Activated CD4-positive, alpha-beta T cell treated with anti-CD3 and anti-CD28 coated beads, Interleukin-2, amount 10 ng/mL, durations not matched to agents 24 days and 14 days (primary cell): ENCODE measurements at regions of chr13 and their contacts with region 1.

Region 1: GRCh38 chr13:33542283-33543088 is 256.9 kb upstream of the STARD13 start:
- DNase-seq: peak; percentile 100
- H3K4me3 Mint-ChIP-seq: peak overlapping the region; percentile 90
- H3K27ac Mint-ChIP-seq: peak overlapping the region; percentile 99
- H3K4me1 Mint-ChIP-seq: peaks cover 37% of the 10 kb centered on the region
- H3K27me3 Mint-ChIP-seq: peaks cover 2% of the 10 kb centered on the region

Region 2: DNA sequence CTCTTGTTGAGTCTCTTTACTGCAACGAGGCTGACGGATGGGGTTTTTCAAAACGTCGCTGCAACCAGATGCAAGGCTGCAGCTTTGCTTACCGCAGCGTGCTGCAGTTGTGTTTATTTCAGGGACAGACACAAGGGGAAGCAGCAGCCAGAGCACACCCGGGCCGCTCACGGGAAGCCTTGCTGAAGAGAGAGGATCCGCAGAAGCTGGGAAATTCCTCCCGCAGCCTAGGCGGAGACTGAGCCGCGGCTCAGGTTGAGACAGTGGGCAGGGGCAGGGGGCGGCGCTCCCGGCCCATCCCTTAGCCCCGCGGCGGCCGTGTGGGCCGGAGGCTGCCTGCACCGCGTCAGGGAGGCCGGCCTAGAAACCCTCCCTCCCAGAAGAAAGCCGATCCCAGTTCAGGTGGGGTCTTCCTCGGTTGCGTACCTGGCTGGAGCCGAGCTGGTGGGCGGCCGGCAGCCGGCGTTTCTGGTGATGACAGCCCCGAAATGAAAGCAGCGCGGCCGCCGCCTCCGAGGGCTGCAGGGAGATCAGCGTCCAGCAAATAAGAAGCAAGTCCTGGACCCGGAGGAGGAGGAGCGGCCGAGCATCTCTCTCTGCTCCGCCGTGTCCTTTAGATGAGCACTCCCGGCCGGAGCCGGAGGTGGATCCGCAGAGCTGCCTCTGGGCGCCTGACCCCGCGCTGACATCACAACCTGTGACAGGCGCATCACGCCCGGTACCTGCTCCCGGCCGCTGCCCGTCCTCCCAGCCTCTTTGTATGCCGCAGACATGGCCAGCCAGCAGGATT is 1511.3 kb before region 1 on chr13 and contains the start of gene FRY:
- intact Hi-C with region 1: loop called (anchors 10 kb)
- DNase-seq: peak; percentile 87
- H3K4me3 Mint-ChIP-seq: peak within 1 kb of the TSS; percentile 83
- H3K27ac Mint-ChIP-seq: peak within 1 kb of the TSS; percentile 61
- H3K4me1 Mint-ChIP-seq: peaks cover 37% of the 10 kb centered on the region
- H3K27me3 Mint-ChIP-seq: peaks cover 7% of the 10 kb centered on the region
- total RNA-seq, gene FRY: 1.8 and 2.8 TPM in 2 replicates

Region 3: DNA sequence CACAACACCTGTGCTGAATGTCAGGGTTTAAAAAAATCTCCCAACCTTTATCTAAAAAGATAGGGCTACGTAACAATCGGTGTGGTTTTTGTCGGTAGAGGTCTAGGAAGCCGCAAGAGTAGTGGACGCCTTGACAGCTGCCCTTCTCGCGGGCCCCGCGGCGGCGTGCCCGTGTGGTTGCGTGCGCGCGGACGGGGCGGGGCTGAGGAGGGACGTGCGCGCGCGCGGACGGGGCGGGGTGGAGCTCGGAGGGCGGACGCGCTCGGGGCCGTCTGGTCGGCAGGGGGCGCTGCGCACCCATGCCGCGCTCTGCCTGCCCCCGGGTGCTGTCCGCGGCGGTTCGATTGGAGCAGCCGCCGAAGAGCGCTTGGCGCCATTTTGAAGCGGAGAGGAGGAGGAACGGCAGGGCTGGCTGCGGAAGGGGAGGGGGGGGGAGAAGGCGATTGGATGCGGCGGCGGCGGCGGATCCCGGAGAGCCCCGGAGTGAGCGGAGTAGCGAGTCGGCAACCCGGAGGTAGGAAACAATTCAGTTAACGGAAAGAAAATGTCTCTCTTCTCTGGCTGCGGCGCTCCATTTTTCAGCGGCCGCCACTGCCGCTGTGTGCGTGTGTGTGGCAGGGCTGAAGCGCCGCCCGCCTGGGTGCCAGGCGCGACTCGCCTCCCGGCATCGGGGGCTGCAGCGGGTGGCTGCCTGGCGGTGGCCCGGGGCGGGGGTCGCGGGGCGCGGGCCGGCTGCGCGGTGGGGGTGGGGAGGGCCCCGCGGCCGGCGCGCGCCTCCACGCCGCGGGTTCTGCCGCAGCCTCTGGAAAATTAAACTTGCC is 956.2 kb before region 1 on chr13 and contains the start of gene PDS5B:
- intact Hi-C with region 1: loop called (anchors 1 kb)
- DNase-seq: peak; percentile 98
- H3K4me3 Mint-ChIP-seq: peak within 1 kb of the TSS; percentile 86
- H3K27ac Mint-ChIP-seq: peak within 1 kb of the TSS; percentile 95
- H3K4me1 Mint-ChIP-seq: peaks cover 36% of the 10 kb centered on the region
- H3K27me3 Mint-ChIP-seq: peaks cover 9% of the 10 kb centered on the region
- total RNA-seq, gene PDS5B: 60.3 and 70.2 TPM in 2 replicates

Region 4: DNA sequence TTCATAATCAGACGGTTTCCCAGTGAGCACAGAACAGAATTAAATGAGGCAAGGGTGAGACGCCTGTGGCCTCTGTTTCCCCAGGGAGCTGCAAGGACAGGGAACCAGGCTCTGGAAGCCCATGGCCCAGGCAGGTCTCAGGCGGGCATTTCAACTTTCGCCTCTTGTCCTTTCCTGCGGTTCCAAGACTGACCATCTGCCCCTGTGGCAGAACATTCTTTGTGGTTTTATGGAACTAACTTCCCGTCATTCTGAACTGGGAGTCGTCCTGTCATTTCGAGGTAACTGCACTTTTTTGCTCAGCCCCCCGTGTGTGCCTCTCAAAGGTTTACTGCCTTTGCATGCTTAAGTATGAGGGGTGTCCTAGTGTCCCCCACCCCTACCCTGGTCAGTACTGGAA is 455.4 kb before region 1 on chr13:
- intact Hi-C with region 1: loop called (anchors 5 kb)
- DNase-seq: no peak
- H3K4me3 Mint-ChIP-seq: peak overlapping the region; percentile 66
- H3K27ac Mint-ChIP-seq: peak overlapping the region; percentile 83
- H3K4me1 Mint-ChIP-seq: peaks cover 22% of the 10 kb centered on the region
- H3K27me3 Mint-ChIP-seq: peaks cover 2% of the 10 kb centered on the region

Region 5: DNA sequence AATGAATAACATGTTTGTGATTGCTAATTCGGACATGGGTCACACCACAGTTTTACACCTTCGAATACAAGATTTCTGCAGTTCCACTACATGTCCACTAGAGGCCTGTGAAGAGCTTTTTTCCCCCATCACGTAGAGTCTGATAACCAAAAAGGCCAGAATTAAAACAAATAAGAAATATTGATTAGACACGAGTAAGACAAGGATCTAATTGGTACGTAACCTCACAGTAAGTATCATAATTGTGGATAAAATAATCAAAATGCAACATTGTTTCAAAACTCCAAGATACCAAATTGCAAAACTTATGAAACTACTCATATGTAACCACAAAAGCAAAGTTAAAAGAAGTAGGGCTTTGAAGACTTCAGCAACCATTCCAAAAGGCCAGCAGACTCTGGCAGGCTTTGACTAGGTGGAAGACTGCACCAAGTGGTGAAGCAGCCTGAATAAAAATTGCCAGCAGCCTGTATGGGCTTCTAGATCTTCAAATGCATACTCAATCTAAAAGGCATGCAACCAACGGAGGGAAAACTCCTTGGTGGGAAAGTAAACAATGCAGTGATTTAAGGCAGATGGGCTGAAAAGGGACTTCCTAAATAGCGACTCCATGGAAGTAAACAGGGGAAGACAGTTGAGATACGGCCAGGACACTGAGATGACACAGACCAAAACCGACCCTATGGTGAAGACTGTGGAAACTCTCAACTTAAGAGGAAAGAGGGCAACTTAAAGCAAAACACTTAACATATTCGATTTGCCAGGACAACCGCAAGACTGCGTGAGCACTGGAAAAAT is 313.6 kb before region 1 on chr13:
- intact Hi-C with region 1: loop called (anchors 1 kb)
- DNase-seq: peak; percentile 67
- H3K4me3 Mint-ChIP-seq: no peak overlapping the region
- H3K27ac Mint-ChIP-seq: peak overlapping the region; percentile 10
- H3K4me1 Mint-ChIP-seq: peaks cover 8% of the 10 kb centered on the region
- H3K27me3 Mint-ChIP-seq: peaks cover 3% of the 10 kb centered on the region

Region 6: DNA sequence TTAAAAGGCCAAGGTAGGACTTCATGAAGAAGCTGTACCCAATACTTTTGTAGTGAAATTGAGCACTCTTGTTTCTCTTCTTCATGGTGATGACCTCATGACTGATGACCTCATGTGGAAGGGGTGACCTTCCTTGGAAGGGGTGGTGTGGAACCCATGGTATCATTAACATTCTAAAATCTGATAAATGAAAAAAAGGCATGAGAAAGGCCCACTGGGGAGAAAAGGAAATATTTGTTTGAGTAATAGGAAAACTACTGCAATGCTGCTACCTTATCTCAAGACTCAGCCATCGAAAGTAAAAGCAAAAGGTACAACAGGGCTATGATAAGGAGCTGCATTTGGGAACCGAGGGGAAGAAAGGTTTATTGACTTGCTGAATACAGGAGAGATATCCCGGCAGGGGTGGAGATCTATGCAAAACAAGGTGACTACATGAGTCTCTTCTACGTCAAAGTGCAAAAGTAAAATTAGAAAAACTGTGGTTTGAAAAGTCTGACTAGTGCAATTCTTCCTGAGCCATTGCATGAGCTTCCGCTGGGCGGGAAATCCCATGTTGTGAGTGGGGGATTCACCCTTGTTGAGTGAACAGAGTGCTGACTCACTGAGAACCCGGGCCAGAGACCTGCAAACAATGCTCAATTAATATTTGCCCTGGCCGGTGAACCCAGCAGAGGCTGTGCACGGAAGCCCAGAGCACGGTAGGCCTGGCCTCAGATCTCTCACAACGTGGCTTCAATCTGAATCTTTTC is 136.6 kb after region 1 on chr13:
- intact Hi-C with region 1: loop called (anchors 1 kb)
- DNase-seq: peak; percentile 88
- H3K4me3 Mint-ChIP-seq: peak overlapping the region; percentile 43
- H3K27ac Mint-ChIP-seq: peak overlapping the region; percentile 92
- H3K4me1 Mint-ChIP-seq: peaks cover 26% of the 10 kb centered on the region
- H3K27me3 Mint-ChIP-seq: no peaks in the 10 kb centered on the region